PC-9 (cell line): ENCODE measurements at regions of chr1 and their contacts with region 1.

Region 1: GRCh38 chr1:100459358-100460114 is 78.4 kb upstream of the GPR88 start:
- DNase-seq: peak; percentile 65 to 66
- H3K4me3 ChIP-seq: no peak overlapping the region
- H3K27ac ChIP-seq: no peak overlapping the region
- H3K4me1 ChIP-seq: no peaks in the 10 kb centered on the region
- H3K27me3 ChIP-seq: no peaks in the 10 kb centered on the region
- CTCF ChIP-seq: peak; percentile 94

Region 2: GRCh38 chr1:99986656-99987225 is 472.8 kb before region 1 on chr1:
- CTCF ChIA-PET with region 1: interaction called, 10 read pairs
- POLR2A ChIA-PET with region 1: no interaction called
- intact Hi-C with region 1: no loop called
- DNase-seq: no peak
- H3K4me3 ChIP-seq: no peak overlapping the region
- H3K27ac ChIP-seq: no peak overlapping the region
- H3K4me1 ChIP-seq: no peaks in the 10 kb centered on the region
- H3K27me3 ChIP-seq: no peaks in the 10 kb centered on the region
- CTCF ChIP-seq: no peak

Region 3: GRCh38 chr1:100132566-100133477 is 326.7 kb before region 1 on chr1 and contains the starts of genes SASS6 and TRMT13:
- CTCF ChIA-PET with region 1: no interaction called
- POLR2A ChIA-PET with region 1: no interaction called
- intact Hi-C with region 1: loop called (anchors 10 kb)
- DNase-seq: peak; percentile 91 to 98
- H3K4me3 ChIP-seq: peak within 1 kb of the TSS; percentile 87
- H3K27ac ChIP-seq: peak within 1 kb of the TSS; percentile 40
- H3K4me1 ChIP-seq: peaks cover 34% of the 10 kb centered on the region
- H3K27me3 ChIP-seq: no peaks in the 10 kb centered on the region
- CTCF ChIP-seq: no peak
- total RNA-seq, gene SASS6: 5.1 and 8.7 TPM in 2 replicates
- total RNA-seq, gene TRMT13: 7.3 and 14.2 TPM in 2 replicates

Region 4: DNA sequence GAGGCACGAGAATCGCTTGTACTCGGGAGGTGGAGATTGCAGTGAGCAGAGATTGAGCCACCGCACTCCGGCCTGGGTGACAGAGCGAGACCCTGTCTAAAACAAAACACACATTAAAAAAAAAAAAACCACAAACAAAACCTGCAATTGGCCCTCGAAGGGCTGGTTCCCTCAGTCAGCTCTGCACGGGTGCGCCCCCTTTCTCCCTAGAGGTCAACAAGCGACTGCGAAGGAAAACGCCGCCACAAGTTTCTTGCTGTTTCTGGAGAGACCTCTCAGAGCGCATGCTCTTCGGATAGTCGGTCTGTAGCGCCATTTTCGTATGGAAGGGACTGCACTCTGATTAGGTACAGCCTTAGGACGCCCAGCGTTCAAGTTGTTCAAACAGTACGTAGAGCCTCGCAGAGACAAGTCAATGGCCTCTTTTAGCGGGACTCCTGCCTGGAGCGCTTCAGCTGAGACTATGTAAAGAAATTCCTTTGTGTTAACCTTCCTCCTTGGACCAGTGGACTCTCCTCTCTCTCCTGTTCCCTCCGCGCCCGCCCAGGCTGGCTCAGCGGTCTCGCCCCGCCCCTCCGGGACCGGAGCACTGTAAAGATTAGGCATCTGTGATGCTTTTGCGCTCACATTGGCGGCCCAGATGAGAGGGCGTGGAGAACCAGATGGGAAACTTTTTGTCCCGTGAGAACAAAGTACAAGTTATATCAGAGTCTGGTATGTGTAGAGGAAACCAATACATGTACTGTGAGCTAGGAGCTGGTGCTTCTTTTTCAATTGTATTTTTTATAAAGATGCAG is 108.2 kb before region 1 on chr1:
- CTCF ChIA-PET with region 1: no interaction called
- POLR2A ChIA-PET with region 1: interaction called, 5 read pairs
- intact Hi-C with region 1: loop called (anchors 5 kb)
- DNase-seq: peak; percentile 78 to 88
- H3K4me3 ChIP-seq: peak overlapping the region; percentile 63
- H3K27ac ChIP-seq: peak overlapping the region; percentile 36
- H3K4me1 ChIP-seq: peaks cover 31% of the 10 kb centered on the region
- H3K27me3 ChIP-seq: no peaks in the 10 kb centered on the region
- CTCF ChIP-seq: peak; percentile 49; the same call in 1 of the 2 replicates

Region 5: GRCh38 chr1:100606438-100606837 is 146.9 kb after region 1 on chr1:
- CTCF ChIA-PET with region 1: no interaction called
- POLR2A ChIA-PET with region 1: no interaction called
- intact Hi-C with region 1: loop called (anchors 1 kb)
- DNase-seq: peak; percentile 22 to 70
- H3K4me3 ChIP-seq: no peak overlapping the region
- H3K27ac ChIP-seq: no peak overlapping the region
- H3K4me1 ChIP-seq: no peaks in the 10 kb centered on the region
- H3K27me3 ChIP-seq: no peaks in the 10 kb centered on the region
- CTCF ChIP-seq: peak; percentile 90

Region 6: GRCh38 chr1:100658716-100659026 is 199.1 kb after region 1 on chr1:
- CTCF ChIA-PET with region 1: no interaction called
- POLR2A ChIA-PET with region 1: no interaction called
- intact Hi-C with region 1: no loop called
- DNase-seq: no peak
- H3K4me3 ChIP-seq: no peak overlapping the region
- H3K27ac ChIP-seq: no peak overlapping the region
- H3K4me1 ChIP-seq: no peaks in the 10 kb centered on the region
- H3K27me3 ChIP-seq: no peaks in the 10 kb centered on the region
- CTCF ChIP-seq: no peak